ENCODE measurements at regions of chr12 and their contacts with region 1.

Region 1: DNA sequence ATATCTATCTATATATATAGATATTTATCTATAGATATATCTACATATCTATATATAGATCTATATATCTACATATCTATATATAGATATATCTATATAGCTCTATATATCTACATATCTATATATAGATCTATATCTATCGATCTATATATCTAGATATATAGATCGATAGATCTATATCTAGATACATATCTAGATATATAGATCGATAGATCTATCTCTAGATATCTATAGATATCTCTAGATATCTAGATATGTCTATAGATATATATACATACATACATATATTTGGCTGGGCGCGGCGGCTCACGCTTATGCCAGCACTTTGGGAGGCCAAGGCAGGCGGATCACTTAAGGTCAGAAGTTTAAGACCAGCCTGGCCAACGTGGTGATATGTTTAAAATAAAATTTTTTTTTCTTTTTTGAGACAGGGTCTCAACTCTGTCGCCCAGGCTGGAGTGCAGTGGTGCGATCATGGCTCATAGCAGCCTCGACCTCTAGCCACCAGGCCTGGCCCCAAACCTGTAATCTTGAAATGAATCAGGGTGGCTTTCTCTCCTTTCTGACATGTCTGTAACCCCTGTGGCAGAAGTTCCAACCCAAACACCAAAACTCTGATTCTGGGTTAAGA is 18.1 kb downstream of the ARPC3 start:
- DNase-seq: no peak
- H3K4me3 ChIP-seq: peak overlapping the region in 1 of 2 donors; percentile 43
- H3K4me3 Mint-ChIP-seq: no peak overlapping the region
- H3K27ac ChIP-seq: no peak overlapping the region
- H3K27ac Mint-ChIP-seq: peak overlapping the region in 4 of 7 donors; percentile 18 to 99 (median 55)
- H3K4me1 ChIP-seq: peaks cover 4% of the 10 kb centered on the region
- H3K4me1 Mint-ChIP-seq: peaks cover 2 to 12% (median 3%) of the 10 kb centered on the region in 4 donors
- H3K27me3 ChIP-seq: no peaks in the 10 kb centered on the region
- H3K27me3 Mint-ChIP-seq: no peaks in the 10 kb centered on the region

Region 2: GRCh38 chr12:110079477-110080400 is 352.3 kb before region 1 on chr12:
- CTCF ChIA-PET with region 1: interaction called, 3 read pairs
- POLR2A ChIA-PET with region 1: interaction called, 10 read pairs
- intact Hi-C with region 1: no loop called
- DNase-seq: peak; percentile 78 to 84 (median 80)
- H3K4me3 ChIP-seq: peak overlapping the region; percentile 30 to 64
- H3K4me3 Mint-ChIP-seq: peak overlapping the region; percentile 84 to 95 (median 90)
- H3K27ac ChIP-seq: peak overlapping the region; percentile 48
- H3K27ac Mint-ChIP-seq: peak overlapping the region; percentile 90 to 100 (median 98)
- H3K4me1 ChIP-seq: peaks cover 25% of the 10 kb centered on the region
- H3K4me1 Mint-ChIP-seq: peaks cover 17 to 29% (median 20%) of the 10 kb centered on the region in 4 donors
- H3K27me3 ChIP-seq: no peaks in the 10 kb centered on the region
- H3K27me3 Mint-ChIP-seq: no peaks in the 10 kb centered on the region

Region 3: GRCh38 chr12:110124184-110124995 is 307.7 kb before region 1 on chr12 and contains the start of gene IFT81:
- CTCF ChIA-PET with region 1: interaction called, 7 read pairs
- POLR2A ChIA-PET with region 1: interaction called, 3 read pairs
- intact Hi-C with region 1: loop called (anchors 1 kb)
- DNase-seq: peak; percentile 92 to 95 (median 93)
- H3K4me3 ChIP-seq: peak within 1 kb of the TSS; percentile 70 to 89
- H3K4me3 Mint-ChIP-seq: peak within 1 kb of the TSS; percentile 91 to 96 (median 94)
- H3K27ac ChIP-seq: peak within 1 kb of the TSS; percentile 72
- H3K27ac Mint-ChIP-seq: peak within 1 kb of the TSS; percentile 76 to 97 (median 95)
- H3K4me1 ChIP-seq: peaks cover 10% of the 10 kb centered on the region
- H3K4me1 Mint-ChIP-seq: peaks cover 3 to 15% (median 8%) of the 10 kb centered on the region in 4 donors
- H3K27me3 ChIP-seq: no peaks in the 10 kb centered on the region
- H3K27me3 Mint-ChIP-seq: peaks cover 5 to 10% of the 10 kb centered on the region in 2 donors
- total RNA-seq, gene IFT81: 1.1 to 1.3 TPM

Region 4: GRCh38 chr12:110349531-110350151 is 82.4 kb before region 1 on chr12:
- CTCF ChIA-PET with region 1: interaction called, 25 read pairs
- POLR2A ChIA-PET with region 1: interaction called, 3 read pairs
- intact Hi-C with region 1: loop called (anchors 2 kb)
- DNase-seq: peak; percentile 27 to 54 (median 31)
- H3K4me3 ChIP-seq: no peak overlapping the region
- H3K4me3 Mint-ChIP-seq: peak overlapping the region in 7 of 8 donors; percentile 6 to 62 (median 53)
- H3K27ac ChIP-seq: no peak overlapping the region
- H3K27ac Mint-ChIP-seq: peak overlapping the region; percentile 53 to 94 (median 81)
- H3K4me1 ChIP-seq: peaks cover 24% of the 10 kb centered on the region
- H3K4me1 Mint-ChIP-seq: peaks cover 22 to 37% (median 33%) of the 10 kb centered on the region in 4 donors
- H3K27me3 ChIP-seq: no peaks in the 10 kb centered on the region
- H3K27me3 Mint-ChIP-seq: no peaks in the 10 kb centered on the region

Region 5: GRCh38 chr12:110379631-110380030 is 52.4 kb before region 1 on chr12:
- CTCF ChIA-PET with region 1: interaction called, 11 read pairs
- POLR2A ChIA-PET with region 1: no interaction called
- intact Hi-C with region 1: no loop called
- DNase-seq: no peak
- H3K4me3 ChIP-seq: no peak overlapping the region
- H3K4me3 Mint-ChIP-seq: no peak overlapping the region
- H3K27ac ChIP-seq: no peak overlapping the region
- H3K27ac Mint-ChIP-seq: no peak overlapping the region
- H3K4me1 ChIP-seq: peaks cover 4% of the 10 kb centered on the region
- H3K4me1 Mint-ChIP-seq: peaks cover 2 to 10% (median 4%) of the 10 kb centered on the region in 4 donors
- H3K27me3 ChIP-seq: no peaks in the 10 kb centered on the region
- H3K27me3 Mint-ChIP-seq: no peaks in the 10 kb centered on the region

Region 6: DNA sequence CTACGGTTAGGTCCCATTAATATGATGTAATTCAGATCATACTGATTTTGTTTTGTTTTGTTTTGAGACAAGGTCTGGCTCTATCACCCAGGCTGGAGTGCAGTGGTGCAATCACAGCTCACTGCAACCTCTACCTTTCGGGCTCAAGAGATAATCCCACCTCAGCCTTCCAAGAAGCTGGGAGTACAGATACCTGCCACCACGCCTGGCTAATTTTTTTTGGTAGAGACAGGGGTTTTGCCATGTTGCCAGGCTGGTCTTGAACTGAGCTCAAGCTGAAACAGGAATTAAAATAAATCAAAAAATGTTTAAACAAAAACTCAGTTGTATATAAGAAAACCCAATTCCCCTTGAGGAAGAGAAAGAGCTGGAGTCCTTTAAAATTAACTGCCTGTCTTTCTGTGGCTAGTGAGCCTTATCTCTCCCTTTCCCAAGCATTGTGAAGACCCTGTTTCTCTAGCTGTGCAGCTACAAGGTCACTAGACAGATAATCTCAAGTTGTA is 10.9 kb before region 1 on chr12:
- CTCF ChIA-PET with region 1: interaction called, 21 read pairs
- POLR2A ChIA-PET with region 1: interaction called, 3 read pairs
- intact Hi-C with region 1: no loop called
- DNase-seq: no peak
- H3K4me3 ChIP-seq: no peak overlapping the region
- H3K4me3 Mint-ChIP-seq: no peak overlapping the region
- H3K27ac ChIP-seq: no peak overlapping the region
- H3K27ac Mint-ChIP-seq: peak overlapping the region in 2 of 7 donors; percentile 18 to 39
- H3K4me1 ChIP-seq: no peaks in the 10 kb centered on the region
- H3K4me1 Mint-ChIP-seq: no peaks in the 10 kb centered on the region
- H3K27me3 ChIP-seq: no peaks in the 10 kb centered on the region
- H3K27me3 Mint-ChIP-seq: peaks cover 0 to 2% of the 10 kb centered on the region in 2 donors

Region 7: GRCh38 chr12:110449799-110450497 is 17.9 kb after region 1 on chr12 and contains the start of gene ARPC3:
- CTCF ChIA-PET with region 1: interaction called, 35 read pairs
- POLR2A ChIA-PET with region 1: interaction called, 26 read pairs
- intact Hi-C with region 1: loop called (anchors 1 kb)
- DNase-seq: peak; percentile 94 to 96 (median 94)
- H3K4me3 ChIP-seq: peak within 1 kb of the TSS; percentile 76 to 90
- H3K4me3 Mint-ChIP-seq: peak within 1 kb of the TSS; percentile 99 to 100 (median 100)
- H3K27ac ChIP-seq: peak within 1 kb of the TSS; percentile 97
- H3K27ac Mint-ChIP-seq: peak within 1 kb of the TSS; percentile 99 to 100 (median 99)
- H3K4me1 ChIP-seq: peaks cover 34% of the 10 kb centered on the region
- H3K4me1 Mint-ChIP-seq: peaks cover 17 to 47% (median 38%) of the 10 kb centered on the region in 4 donors
- H3K27me3 ChIP-seq: no peaks in the 10 kb centered on the region
- H3K27me3 Mint-ChIP-seq: no peaks in the 10 kb centered on the region
- total RNA-seq, gene ARPC3: 191 to 203 TPM

Region 8: DNA sequence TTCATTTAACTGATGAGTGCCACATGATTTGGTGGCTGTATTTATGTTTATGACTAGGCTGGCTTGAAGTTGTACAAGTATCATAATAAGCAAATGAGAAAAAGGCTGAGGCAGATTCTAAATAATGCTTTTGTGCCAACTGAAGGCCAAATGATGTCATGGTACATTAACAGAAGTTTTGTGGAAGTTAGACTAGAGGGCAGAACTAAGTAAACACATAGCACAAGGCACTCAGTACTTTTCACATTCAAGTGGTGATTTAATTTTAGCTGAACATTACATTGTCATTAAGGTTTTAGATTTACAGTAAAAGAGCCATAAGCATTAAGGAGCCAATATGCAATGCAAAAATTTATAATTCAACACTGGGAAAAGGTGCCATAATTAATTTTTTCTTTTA is 289.5 kb after region 1 on chr12:
- CTCF ChIA-PET with region 1: no interaction called
- POLR2A ChIA-PET with region 1: no interaction called
- intact Hi-C with region 1: no loop called
- DNase-seq: no peak
- H3K4me3 ChIP-seq: no peak overlapping the region
- H3K4me3 Mint-ChIP-seq: no peak overlapping the region
- H3K27ac ChIP-seq: no peak overlapping the region
- H3K27ac Mint-ChIP-seq: peak overlapping the region in 1 of 7 donors; percentile 42
- H3K4me1 ChIP-seq: peaks cover 9% of the 10 kb centered on the region
- H3K4me1 Mint-ChIP-seq: peaks cover 9 to 19% (median 14%) of the 10 kb centered on the region in 4 donors
- H3K27me3 ChIP-seq: no peaks in the 10 kb centered on the region
- H3K27me3 Mint-ChIP-seq: no peaks in the 10 kb centered on the region

Measured in CD4-positive, alpha-beta memory T cell (primary cell).